ENCODE measurements at regions of chr3 and their contacts with region 1.

Region 1: GRCh38 chr3:33658991-33659848 is 58.8 kb downstream of the CLASP2 start:
- DNase-seq: peak; percentile 86
- H3K4me3 ChIP-seq: peak overlapping the region; percentile 61
- H3K27ac ChIP-seq: peak overlapping the region; percentile 71
- H3K4me1 ChIP-seq: peaks cover 40% of the 10 kb centered on the region
- CTCF ChIP-seq: 0 out of 2 replicates have a peak, but pooled peaks have one; percentile 26

Region 2: DNA sequence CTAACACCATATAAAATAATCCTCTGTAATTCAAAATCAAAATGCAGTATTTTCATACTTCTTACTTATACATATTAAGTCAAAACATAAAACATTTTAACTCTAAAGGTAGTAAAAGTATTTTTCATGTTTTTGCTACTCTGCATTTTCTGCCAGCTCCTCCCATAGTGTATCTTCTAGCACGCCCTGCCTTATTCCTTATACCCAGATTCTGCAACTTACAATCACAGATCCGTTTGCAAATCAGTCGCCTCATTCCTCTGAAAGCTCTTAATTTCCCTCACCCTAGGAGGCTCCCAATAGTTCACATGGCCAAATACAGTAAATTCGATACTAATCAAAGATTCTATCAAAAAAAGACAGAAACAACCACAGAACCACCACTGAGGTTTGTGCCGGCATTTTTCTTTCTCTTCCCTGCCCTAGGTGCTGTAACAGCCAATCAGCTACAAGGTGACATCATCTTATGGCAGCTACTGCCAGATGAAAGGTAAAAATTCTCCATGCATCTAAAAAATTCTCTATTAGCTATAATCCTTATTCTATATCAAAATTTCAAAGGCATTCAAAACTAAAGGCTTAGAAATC is 14.1 kb before region 1 on chr3:
- CTCF ChIA-PET with region 1: no interaction called
- POLR2A ChIA-PET with region 1: interaction called, 13 read pairs
- intact Hi-C with region 1: no loop called
- DNase-seq: no peak
- H3K4me3 ChIP-seq: no peak overlapping the region
- H3K27ac ChIP-seq: no peak overlapping the region
- H3K4me1 ChIP-seq: no peaks in the 10 kb centered on the region
- CTCF ChIP-seq: no peak

Region 3: GRCh38 chr3:33681667-33682066 is 22.4 kb after region 1 on chr3:
- CTCF ChIA-PET with region 1: no interaction called
- POLR2A ChIA-PET with region 1: interaction called, 11 read pairs
- intact Hi-C with region 1: no loop called
- DNase-seq: no peak
- H3K4me3 ChIP-seq: no peak overlapping the region
- H3K27ac ChIP-seq: no peak overlapping the region
- H3K4me1 ChIP-seq: no peaks in the 10 kb centered on the region
- CTCF ChIP-seq: no peak

Region 4: GRCh38 chr3:33717866-33718594 is 58.8 kb after region 1 on chr3 and contains the start of gene CLASP2:
- CTCF ChIA-PET with region 1: no interaction called
- POLR2A ChIA-PET with region 1: interaction called, 10 read pairs
- intact Hi-C with region 1: loop called (anchors 1 kb)
- DNase-seq: peak; percentile 92
- H3K4me3 ChIP-seq: peak within 1 kb of the TSS; percentile 94
- H3K27ac ChIP-seq: peak within 1 kb of the TSS; percentile 69
- H3K4me1 ChIP-seq: peaks cover 27% of the 10 kb centered on the region
- CTCF ChIP-seq: no peak
- total RNA-seq, gene CLASP2: 99.1 and 108 TPM in 2 replicates

Region 5: GRCh38 chr3:33798411-33799201 is 139.4 kb after region 1 on chr3 and contains the start of gene PDCD6IP:
- CTCF ChIA-PET with region 1: interaction called, 6 read pairs
- POLR2A ChIA-PET with region 1: interaction called, 28 read pairs
- intact Hi-C with region 1: loop called (anchors 2 kb)
- DNase-seq: peak; percentile 92
- H3K4me3 ChIP-seq: peak within 1 kb of the TSS; percentile 84
- H3K27ac ChIP-seq: peak within 1 kb of the TSS; percentile 56
- H3K4me1 ChIP-seq: peaks cover 32% of the 10 kb centered on the region
- CTCF ChIP-seq: peak; percentile 34; the same call in 1 of the 2 replicates
- total RNA-seq, gene PDCD6IP: 75.5 and 126 TPM in 2 replicates

Measured in OCI-LY7 (cell line).